Motor neuron (in vitro differentiated cells): ENCODE measurements at regions of chr17 and their contacts with region 1.

Region 1: GRCh38 chr17:44919885-44920564 is 4.7 kb upstream of the GFAP start:
- ATAC-seq: peak; percentile 77 to 100 (median 87)
- H3K4me3 ChIP-seq: no peak overlapping the region
- H3K27ac ChIP-seq: no peak overlapping the region
- H3K4me1 ChIP-seq: peaks cover 22 to 26% of the 10 kb centered on the region in 2 donors

Region 2: DNA sequence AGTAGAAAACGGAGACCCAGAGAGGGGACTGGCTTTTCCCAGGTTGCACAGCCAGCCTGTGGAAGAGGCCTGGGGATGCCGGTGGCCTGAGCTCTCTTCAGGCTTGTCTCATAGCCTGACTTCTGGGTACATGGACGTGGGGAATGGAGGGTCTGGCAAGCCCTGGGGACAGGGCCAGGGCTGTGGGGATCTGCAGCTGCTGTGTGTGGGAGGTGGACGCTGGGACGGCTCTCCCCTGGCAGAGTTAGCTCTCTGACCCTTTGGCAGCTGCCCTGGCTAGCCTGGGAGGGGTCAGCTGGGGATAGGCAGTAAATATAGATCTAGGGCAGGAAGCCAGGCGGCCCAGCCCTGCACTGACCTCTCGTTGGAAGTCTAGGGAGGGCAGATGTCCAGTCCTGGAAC is 672.6 kb before region 1 on chr17:
- in situ Hi-C with region 1: no loop called
- ATAC-seq: peak in 2 of 8 experiments; percentile 84 to 92
- H3K4me3 ChIP-seq: no peak overlapping the region
- H3K27ac ChIP-seq: no peak overlapping the region
- H3K4me1 ChIP-seq: peaks cover 0 to 6% of the 10 kb centered on the region in 2 donors

Region 3: DNA sequence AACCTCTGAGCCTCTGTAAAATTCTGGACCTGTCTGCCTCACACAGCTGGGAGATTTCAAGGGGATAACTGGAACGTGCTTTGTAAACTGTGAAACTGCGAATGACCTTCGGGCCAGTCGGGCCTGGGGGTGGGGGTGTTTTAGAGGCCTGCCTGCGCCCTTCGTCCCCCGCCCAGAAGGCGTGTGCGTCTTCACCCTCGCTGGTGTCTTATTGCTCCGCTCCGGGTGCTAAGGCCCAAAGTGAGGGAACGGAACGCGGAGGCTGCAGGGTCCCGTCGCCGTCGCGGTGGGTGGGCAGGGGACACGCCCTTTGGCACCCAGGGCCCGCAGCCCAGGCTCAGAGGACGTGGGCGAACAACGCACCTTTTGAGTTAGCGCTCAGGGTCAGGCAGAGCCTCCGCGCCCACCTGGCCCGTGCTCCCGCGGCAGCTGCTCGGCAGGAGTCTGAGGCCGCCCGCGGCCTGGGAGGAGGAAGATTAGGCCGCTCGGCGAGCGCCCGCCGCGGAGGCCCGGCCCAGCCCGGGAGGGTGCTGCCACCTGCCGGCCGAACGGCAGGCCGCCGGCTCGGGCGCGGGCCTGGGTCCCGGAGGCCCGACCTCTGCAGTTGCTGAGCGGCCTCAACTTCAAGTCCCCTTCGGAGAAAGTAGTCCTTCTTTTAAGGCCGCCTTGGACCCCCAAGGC is 101.7 kb after region 1 on chr17:
- in situ Hi-C with region 1: loop called in 7 of 9 experiments (anchors 5 to 25 kb)
- ATAC-seq: peak; percentile 65 to 81 (median 71)
- H3K4me3 ChIP-seq: peak overlapping the region in 3 of 5 donors; percentile 17 to 20 (median 19)
- H3K27ac ChIP-seq: no peak overlapping the region
- H3K4me1 ChIP-seq: peaks cover 35% of the 10 kb centered on the region in 2 donors

Region 4: GRCh38 chr17:45048795-45049563 is 129.0 kb after region 1 on chr17:
- in situ Hi-C with region 1: loop called in 1 of 9 experiments (anchors 25 kb)
- ATAC-seq: no peak
- H3K4me3 ChIP-seq: no peak overlapping the region
- H3K27ac ChIP-seq: no peak overlapping the region
- H3K4me1 ChIP-seq: peaks cover 10 to 16% of the 10 kb centered on the region in 2 donors